Calu3 (cell line): ENCODE measurements at regions of chr16 and their contacts with region 1.

Region 1: DNA sequence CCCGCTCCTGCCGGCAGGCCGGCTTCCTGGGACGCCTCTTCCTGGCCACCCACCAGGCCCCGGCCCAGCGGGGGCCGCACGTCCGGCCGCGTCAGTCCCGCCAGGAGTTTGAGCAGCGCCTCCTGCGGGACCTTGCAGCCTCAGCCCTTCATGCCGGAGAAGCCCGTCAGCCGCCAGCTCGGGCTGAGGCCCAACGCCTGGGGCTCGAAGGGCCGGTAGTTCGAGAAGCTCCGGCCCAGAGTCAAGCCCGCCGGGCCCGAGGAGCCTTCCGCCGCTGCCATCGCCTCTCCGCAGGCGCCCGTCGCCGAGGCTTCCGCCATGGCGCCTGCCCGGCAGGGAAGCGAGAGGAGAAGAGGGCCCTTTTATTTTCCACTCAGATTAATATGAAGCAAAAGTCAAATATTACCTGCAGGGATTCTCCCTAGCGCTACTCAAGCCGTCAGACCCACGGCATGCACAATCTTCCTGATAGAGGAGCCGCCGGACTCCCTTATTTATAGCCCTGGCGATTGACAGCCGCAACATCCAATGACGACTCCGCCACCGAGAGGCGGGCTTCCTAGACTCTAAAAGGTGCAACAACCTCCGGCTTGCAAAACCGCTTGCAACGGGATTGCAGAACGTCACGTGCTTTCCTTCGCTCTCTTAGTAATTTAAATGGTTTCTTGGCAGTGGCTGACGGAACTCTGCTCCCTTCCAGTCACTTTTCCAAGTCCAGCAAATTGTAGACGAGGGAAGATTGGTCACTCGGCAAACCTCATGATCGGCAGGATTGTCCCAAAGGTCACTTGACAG is at the start of gene SEPHS2:
- DNase-seq: peak; percentile 97
- H3K4me3 Mint-ChIP-seq: peak within 1 kb of the TSS; percentile 76
- H3K27ac Mint-ChIP-seq: peak within 1 kb of the TSS; percentile 98
- H3K4me1 Mint-ChIP-seq: peaks cover 53% of the 10 kb centered on the region
- H3K27me3 Mint-ChIP-seq: no peaks in the 10 kb centered on the region
- CTCF ChIP-seq: no peak
- total RNA-seq, gene SEPHS2: 85.0 and 109 TPM in 2 replicates

Region 2: DNA sequence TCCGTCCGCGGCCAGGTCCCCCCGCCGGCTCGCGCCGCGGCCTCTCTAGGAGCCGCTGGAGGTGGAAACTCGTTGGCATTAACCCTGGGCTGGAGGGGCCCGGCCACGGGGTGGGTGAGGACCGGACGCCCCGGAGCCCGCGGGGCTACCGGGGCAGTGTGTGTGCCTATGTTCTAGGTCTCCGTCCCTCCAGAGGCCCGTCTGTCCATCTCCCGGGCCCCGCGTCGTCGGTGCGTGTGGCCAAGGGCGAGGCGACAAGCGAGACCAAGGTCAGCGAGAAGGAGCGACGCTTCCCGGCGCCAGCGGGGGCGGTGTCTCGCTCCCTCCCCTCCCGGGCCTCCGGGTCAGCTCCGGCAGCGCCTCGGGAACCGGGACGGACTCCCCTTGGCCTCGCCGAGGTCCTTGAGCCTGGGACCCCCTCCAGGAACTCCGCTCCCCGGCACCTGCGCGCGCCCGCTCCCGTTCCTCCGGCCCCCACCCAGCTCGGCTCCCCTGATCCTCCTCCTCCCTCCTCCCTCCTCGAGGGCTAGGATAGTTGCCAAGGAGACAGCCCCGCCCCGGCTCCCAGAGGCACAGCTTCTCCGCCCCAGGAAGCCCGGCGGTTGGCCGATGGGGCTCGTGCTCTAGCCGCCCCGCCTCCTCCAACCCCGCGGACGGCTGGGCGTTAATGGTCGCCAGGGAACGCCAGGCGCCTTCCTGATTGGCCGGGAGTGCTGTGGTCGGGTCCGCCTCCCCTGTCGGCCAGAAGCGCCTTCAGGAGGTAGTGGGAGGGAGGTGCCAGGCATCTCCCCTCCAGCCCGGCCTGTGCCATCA is 81.4 kb after region 1 on chr16:
- CTCF ChIA-PET with region 1: interaction called, 3 read pairs
- intact Hi-C with region 1: loop called (anchors 5 kb)
- DNase-seq: peak; percentile 99
- H3K4me3 Mint-ChIP-seq: peak overlapping the region; percentile 83
- H3K27ac Mint-ChIP-seq: peak overlapping the region; percentile 76
- H3K4me1 Mint-ChIP-seq: peaks cover 26% of the 10 kb centered on the region
- H3K27me3 Mint-ChIP-seq: no peaks in the 10 kb centered on the region
- CTCF ChIP-seq: peak; percentile 47

Region 3: GRCh38 chr16:30551781-30552180 is 106.2 kb after region 1 on chr16:
- CTCF ChIA-PET with region 1: no interaction called
- intact Hi-C with region 1: no loop called
- DNase-seq: no peak
- H3K4me3 Mint-ChIP-seq: no peak overlapping the region
- H3K27ac Mint-ChIP-seq: no peak overlapping the region
- H3K4me1 Mint-ChIP-seq: peaks cover 18% of the 10 kb centered on the region
- H3K27me3 Mint-ChIP-seq: no peaks in the 10 kb centered on the region
- CTCF ChIP-seq: no peak

Region 4: GRCh38 chr16:30657866-30658730 is 212.5 kb after region 1 on chr16 and contains the start of gene FBRS:
- CTCF ChIA-PET with region 1: no interaction called
- intact Hi-C with region 1: no loop called
- DNase-seq: peak; percentile 100
- H3K4me3 Mint-ChIP-seq: peak within 1 kb of the TSS; percentile 91
- H3K27ac Mint-ChIP-seq: peak within 1 kb of the TSS; percentile 99
- H3K4me1 Mint-ChIP-seq: peaks cover 28% of the 10 kb centered on the region
- H3K27me3 Mint-ChIP-seq: no peaks in the 10 kb centered on the region
- CTCF ChIP-seq: peak; percentile 84
- total RNA-seq, gene FBRS: 113 and 114 TPM in 2 replicates